ENCODE measurements at regions of chr16 and their contacts with region 1.

Region 1: DNA sequence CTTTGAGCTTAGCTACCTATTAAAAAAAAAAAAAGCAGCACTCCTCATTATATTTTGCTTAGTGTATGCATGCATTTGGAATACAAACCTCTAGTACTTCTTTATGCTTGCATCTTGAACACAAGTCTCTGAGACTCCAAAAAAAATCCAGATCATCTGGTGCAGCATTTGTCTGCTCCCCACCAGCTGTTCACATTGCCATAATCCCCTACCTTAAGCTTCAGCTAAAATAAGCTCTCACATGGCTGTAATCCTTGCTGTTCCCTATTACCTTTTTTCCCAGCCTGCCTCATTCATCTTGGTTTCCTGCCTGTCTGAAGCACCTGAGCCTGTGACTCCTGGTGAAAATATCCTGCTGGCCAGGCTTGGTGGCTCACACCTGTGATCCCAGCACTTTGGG is 7.5 kb upstream of the NFATC2IP start:
- DNase-seq: no peak
- H3K4me3 ChIP-seq: no peak overlapping the region
- H3K27ac ChIP-seq: no peak overlapping the region
- H3K4me1 ChIP-seq: peaks cover 4 to 10% (median 6%) of the 10 kb centered on the region in 4 donors
- H3K27me3 ChIP-seq: no peaks in the 10 kb centered on the region
- CTCF ChIP-seq: no peak
- EP300 ChIP-seq: no peak
- POLR2A ChIP-seq: no peak

Region 2: GRCh38 chr16:28553776-28554633 is 389.3 kb before region 1 on chr16 and contains the start of gene SGF29:
- in situ Hi-C with region 1: no loop called
- intact Hi-C with region 1: no loop called
- DNase-seq: peak; percentile 95
- H3K4me3 ChIP-seq: peak within 1 kb of the TSS; percentile 62 to 80 (median 66)
- H3K27ac ChIP-seq: peak within 1 kb of the TSS; percentile 97 to 99 (median 98)
- H3K4me1 ChIP-seq: peaks cover 5 to 28% (median 13%) of the 10 kb centered on the region in 4 donors
- H3K27me3 ChIP-seq: no peaks in the 10 kb centered on the region
- CTCF ChIP-seq: peak in 2 of 5 experiments; percentile 39
- EP300 ChIP-seq: no peak
- POLR2A ChIP-seq: peak; percentile 94
- total RNA-seq, gene SGF29: 22.1 to 95.0 (median 32.1) TPM

Region 3: GRCh38 chr16:28823872-28824716 is 119.2 kb before region 1 on chr16:
- in situ Hi-C with region 1: loop called in 1 of 4 experiments (anchors 10 kb)
- intact Hi-C with region 1: no loop called
- DNase-seq: peak; percentile 97
- H3K4me3 ChIP-seq: peak overlapping the region; percentile 84 to 100 (median 99)
- H3K27ac ChIP-seq: peak overlapping the region; percentile 99 to 100 (median 100)
- H3K4me1 ChIP-seq: peaks cover 16 to 31% (median 24%) of the 10 kb centered on the region in 4 donors
- H3K27me3 ChIP-seq: no peaks in the 10 kb centered on the region
- CTCF ChIP-seq: peak in 4 of 5 experiments; percentile 21 to 67 (median 26)
- EP300 ChIP-seq: no peak
- POLR2A ChIP-seq: peak; percentile 71

Region 4: DNA sequence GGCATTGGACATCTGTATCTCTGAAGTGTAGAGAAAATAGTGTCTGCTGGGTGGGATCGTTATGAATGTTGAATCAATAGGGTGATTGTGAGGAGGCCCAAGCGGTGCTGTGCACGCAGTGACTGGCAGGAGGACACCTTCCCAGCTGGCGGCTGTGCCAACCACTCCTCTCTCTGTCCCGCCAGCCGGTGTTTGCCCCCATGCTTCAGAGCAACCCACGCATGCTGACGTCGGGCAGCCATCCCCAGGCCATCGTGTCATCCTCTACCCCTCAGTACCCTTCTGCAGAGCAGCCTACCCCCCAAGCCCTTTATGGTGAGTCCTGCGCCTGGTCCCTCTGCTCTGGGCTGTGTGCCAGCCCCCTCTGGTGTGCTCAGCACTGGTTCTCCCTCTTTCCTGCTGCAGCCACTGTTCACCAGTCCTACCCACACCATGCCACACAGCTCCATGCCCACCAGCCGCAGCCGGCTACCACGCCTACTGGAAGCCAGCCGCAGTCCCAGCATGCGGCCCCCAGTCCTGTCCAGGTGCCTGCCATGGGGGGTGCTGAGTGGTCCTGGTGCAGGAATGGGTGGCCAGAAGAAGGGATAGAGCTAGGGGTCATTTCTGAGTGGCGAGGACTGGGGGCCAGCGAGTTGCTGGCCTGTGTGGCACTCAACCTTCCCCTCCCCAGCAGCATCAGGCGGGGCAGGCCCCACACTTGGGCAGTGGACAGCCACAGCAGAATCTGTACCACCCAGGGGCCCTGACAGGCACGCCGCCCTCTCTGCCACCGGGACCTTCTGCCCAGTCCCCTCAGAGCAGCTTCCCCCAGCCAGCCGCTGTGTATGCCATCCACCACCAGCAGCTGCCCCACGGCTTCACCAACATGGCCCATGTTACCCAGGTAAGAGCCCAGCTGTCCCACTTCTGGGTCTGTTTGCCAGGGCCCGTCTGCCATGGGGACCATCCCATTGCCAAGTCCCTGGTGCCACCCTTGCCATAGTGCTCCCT is 108.1 kb before region 1 on chr16:
- in situ Hi-C with region 1: no loop called
- intact Hi-C with region 1: no loop called
- DNase-seq: no peak
- H3K4me3 ChIP-seq: no peak overlapping the region
- H3K27ac ChIP-seq: no peak overlapping the region
- H3K4me1 ChIP-seq: no peaks in the 10 kb centered on the region
- H3K27me3 ChIP-seq: no peaks in the 10 kb centered on the region
- CTCF ChIP-seq: no peak
- EP300 ChIP-seq: no peak
- POLR2A ChIP-seq: no peak

Region 5: DNA sequence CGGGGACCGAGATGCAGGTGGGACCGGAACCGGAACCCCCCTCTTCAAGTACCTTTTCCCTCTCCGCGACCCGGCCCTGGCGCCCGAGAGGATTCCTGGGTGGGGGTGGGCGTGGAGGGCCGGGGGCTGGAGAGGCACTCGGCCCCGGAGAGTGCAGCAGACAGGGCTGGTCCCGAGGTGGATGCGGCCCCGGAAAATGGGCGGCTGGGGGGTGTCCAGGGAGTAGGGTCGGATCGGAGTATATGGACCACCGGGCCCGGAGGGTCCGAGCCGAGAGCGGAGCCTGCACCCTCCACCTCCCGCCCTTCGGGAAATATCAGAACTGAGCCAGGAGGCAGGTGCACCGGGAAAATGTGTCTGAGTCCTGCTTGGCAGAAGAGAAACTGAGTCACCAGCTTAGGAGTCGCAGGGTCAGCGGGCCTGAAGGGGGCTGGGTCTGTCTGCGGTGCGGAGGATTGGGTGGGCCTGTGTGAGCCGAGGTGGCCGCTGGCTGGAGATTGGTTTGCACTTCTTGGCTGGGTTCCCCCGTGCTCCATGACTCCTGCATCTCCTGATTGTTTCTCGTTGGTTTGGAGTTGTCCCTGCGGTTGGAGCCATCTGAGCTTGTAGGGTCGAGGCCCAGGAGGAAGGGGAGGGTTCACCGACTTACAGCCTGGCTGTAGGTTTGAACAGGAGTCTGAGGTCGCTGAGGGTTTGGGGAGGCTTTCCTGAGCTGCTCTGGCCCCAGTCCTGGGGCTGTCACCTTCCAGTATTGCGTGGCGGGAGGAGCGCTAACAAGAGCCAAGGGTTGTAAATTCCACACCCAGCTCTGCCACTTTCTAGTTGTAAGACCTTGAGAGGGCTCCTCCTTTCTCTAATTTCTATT is 79.1 kb before region 1 on chr16:
- in situ Hi-C with region 1: loop called in 1 of 4 experiments (anchors 10 kb)
- intact Hi-C with region 1: no loop called
- DNase-seq: peak; percentile 65
- H3K4me3 ChIP-seq: peak overlapping the region; percentile 62 to 96 (median 82)
- H3K27ac ChIP-seq: peak overlapping the region; percentile 92 to 99 (median 95)
- H3K4me1 ChIP-seq: peaks cover 13 to 27% (median 24%) of the 10 kb centered on the region in 4 donors
- H3K27me3 ChIP-seq: no peaks in the 10 kb centered on the region
- CTCF ChIP-seq: no peak
- EP300 ChIP-seq: no peak
- POLR2A ChIP-seq: peak; percentile 22

Region 6: GRCh38 chr16:28910086-28911031 is 32.9 kb before region 1 on chr16:
- in situ Hi-C with region 1: no loop called
- intact Hi-C with region 1: no loop called
- DNase-seq: peak; percentile 74
- H3K4me3 ChIP-seq: no peak overlapping the region
- H3K27ac ChIP-seq: peak overlapping the region; percentile 48 to 65 (median 54)
- H3K4me1 ChIP-seq: peaks cover 0 to 11% (median 5%) of the 10 kb centered on the region in 4 donors
- H3K27me3 ChIP-seq: no peaks in the 10 kb centered on the region
- CTCF ChIP-seq: no peak
- EP300 ChIP-seq: no peak
- POLR2A ChIP-seq: no peak

Region 7: DNA sequence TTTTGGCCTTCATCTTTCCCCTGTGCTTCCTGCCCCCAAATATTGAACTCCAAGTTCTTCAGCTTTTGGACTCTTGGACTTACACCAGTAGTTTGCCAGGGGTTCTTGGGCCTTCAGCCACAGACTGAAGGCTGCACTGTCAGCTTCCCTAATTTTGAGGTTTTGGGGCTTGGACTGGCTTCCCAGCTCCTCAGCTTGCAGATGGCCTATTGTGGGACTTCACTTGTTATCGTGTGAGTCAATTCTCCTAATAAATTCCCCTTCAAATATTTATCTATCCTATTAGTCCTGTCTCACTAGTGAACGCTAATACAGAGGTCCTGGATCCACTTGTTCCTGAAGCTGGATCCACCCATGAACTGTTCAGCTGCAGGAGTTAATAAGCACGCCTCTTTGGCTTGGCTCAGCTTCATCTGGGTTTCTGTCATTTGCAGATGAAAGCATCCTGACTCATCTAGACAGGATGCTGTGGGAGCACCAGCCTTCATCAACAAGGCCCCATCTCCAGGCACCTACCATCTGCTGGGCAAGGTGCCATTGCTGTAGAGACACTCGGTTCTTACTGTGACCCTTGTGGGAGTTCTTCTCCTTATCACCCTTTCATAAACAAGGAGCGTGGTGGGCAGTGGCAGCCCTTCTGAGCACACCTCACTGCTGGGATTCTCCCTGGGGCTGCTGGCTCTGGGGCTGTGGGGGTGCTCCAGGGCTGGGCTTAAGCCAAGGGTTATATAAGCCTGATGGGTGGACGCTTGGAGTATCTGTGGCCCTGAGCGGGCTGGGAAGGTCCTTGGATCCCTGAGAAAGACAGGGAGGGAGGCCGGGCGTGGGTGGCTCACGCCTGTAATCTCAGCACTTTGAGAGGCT is 64.7 kb after region 1 on chr16:
- in situ Hi-C with region 1: no loop called
- intact Hi-C with region 1: no loop called
- DNase-seq: no peak
- H3K4me3 ChIP-seq: no peak overlapping the region
- H3K27ac ChIP-seq: no peak overlapping the region
- H3K4me1 ChIP-seq: no peaks in the 10 kb centered on the region
- H3K27me3 ChIP-seq: no peaks in the 10 kb centered on the region
- CTCF ChIP-seq: no peak
- EP300 ChIP-seq: no peak
- POLR2A ChIP-seq: no peak